ENCODE measurements at regions of chr11 and their contacts with region 1.

Region 1: GRCh38 chr11:118705111-118705741 is 25.8 kb upstream of the TREH start:
- DNase-seq: no peak
- H3K4me3 ChIP-seq: no peak overlapping the region
- CTCF ChIP-seq: no peak

Region 2: GRCh38 chr11:118907051-118908042 is 202.1 kb after region 1 on chr11:
- in situ Hi-C with region 1: loop called (anchors 10 kb)
- DNase-seq: no peak
- H3K4me3 ChIP-seq: no peak overlapping the region
- CTCF ChIP-seq: peak; percentile 85

Region 3: DNA sequence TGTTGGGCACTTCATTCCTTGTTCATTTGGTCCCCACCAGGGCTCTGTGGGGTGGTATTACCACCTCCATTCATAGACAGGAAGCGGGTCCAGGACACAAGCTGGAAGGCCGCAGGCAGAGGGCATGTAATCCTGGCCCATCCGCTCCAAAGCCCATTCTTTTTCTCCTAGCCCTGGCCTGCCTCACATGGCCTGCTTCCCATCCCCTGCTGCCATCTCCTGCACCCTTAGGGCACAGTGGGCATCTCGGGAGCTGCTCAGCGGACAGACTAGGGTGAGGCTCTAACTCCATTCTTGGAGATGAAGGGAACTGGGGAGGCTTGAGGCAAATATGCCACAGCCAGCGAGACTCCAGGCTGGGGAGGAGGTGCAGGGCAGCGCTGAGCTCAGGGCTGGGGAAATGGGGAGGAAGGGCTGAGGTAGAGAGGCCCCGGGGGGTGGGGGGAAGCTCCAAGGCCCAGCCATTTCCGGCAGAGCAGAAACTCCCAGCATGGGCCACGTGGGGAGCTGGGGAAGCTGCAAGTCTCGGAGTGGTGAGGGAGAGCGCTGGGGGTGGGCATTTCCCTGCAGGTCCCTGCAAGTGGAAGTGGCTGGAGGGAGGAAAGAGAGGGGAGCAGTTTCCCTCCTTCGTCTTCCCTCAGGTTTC is 234.8 kb after region 1 on chr11:
- in situ Hi-C with region 1: loop called (anchors 10 kb)
- DNase-seq: no peak
- H3K4me3 ChIP-seq: no peak overlapping the region
- CTCF ChIP-seq: no peak

Measured in astrocyte of the cerebellum (primary cell).